Naive thymus-derived CD4-positive, alpha-beta T cell (primary cell): ENCODE measurements at regions of chr3 and their contacts with region 1.

Region 1: DNA sequence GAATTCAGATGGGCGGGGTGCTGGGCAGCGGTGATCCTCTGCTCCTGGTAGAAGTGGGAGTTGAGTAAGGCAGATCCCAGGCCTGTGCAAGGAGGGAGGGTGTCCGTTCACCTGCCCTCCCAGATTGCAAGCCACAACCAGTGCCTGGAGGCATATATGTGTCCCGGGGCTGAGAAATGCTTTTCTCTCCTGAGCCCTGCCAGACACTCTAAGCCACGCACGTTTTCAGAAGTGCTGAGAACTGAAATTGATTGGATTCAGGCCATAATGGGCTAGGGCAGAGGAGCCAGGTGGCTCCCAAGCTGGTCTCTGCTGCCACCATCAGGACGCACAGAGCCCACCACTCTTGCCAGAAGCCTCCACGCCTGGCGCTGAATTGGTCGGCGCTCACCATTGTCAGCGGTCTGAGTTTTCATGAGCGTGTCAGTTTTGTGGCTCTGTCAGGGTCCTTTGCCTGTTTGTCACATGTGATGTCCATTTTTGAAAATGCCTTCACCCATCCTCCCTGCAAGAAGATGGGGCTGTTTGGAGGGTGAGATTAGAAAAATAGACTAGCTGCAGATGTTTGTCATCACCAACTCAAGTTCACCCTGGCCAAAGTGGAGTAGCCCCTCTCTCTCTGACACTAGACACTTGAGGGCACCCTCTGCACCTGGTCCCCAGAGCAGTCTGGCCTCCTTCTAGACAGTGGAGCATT is 15.4 kb upstream of the BFSP2 start:
- DNase-seq: peak in 4 of 9 donors; percentile 4 to 28 (median 4)
- ATAC-seq: no peak
- H3K4me3 ChIP-seq: no peak overlapping the region
- H3K4me3 Mint-ChIP-seq: no peak overlapping the region
- H3K27ac ChIP-seq: no peak overlapping the region
- H3K27ac Mint-ChIP-seq: no peak overlapping the region
- H3K4me1 ChIP-seq: no peaks in the 10 kb centered on the region
- H3K4me1 Mint-ChIP-seq: no peaks in the 10 kb centered on the region
- H3K27me3 ChIP-seq: no peaks in the 10 kb centered on the region
- H3K27me3 Mint-ChIP-seq: peaks cover 0 to 6% (median 0%) of the 10 kb centered on the region in 5 donors

Region 2: DNA sequence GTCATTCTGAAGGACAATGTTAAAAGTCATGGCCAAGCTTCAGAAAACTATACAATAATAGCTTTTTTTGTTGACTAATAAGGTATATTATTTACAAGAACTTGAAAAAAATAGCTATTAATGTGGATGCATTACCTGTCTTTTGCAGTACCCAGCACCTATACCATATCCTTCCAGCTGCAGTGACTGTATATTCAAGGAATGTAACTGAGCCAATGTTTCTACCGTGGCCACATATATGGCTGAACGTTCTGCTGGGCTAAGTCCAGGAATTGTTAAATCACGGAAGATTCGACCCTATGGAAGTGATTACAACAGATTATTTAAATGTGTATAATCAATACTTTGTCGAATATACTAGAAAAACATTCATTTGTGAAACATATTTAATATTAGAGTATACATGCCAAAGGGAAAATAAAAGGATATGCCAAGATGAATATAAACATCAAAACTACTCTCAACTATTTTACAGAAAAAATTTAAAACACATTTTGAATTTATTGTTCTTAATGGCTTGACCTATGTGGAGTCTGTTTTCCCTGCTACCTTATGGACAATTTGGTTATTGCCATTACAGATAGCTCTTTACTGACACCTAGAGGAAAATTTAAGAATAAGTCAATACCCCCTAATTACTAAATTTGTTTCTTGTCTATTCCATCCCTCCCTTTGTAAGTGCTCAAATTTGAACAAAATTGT is 742.5 kb before region 1 on chr3:
- CTCF ChIA-PET with region 1: no interaction called
- POLR2A ChIA-PET with region 1: no interaction called
- intact Hi-C with region 1: no loop called
- DNase-seq: peak in 5 of 9 donors; percentile 17 to 45 (median 36)
- ATAC-seq: peak; percentile 67
- H3K4me3 ChIP-seq: no peak overlapping the region
- H3K4me3 Mint-ChIP-seq: no peak overlapping the region
- H3K27ac ChIP-seq: no peak overlapping the region
- H3K27ac Mint-ChIP-seq: no peak overlapping the region
- H3K4me1 ChIP-seq: no peaks in the 10 kb centered on the region
- H3K4me1 Mint-ChIP-seq: peaks cover 0 to 11% (median 3%) of the 10 kb centered on the region in 7 donors
- H3K27me3 ChIP-seq: no peaks in the 10 kb centered on the region
- H3K27me3 Mint-ChIP-seq: no peaks in the 10 kb centered on the region

Region 3: GRCh38 chr3:132720228-132720627 is 664.3 kb before region 1 on chr3:
- CTCF ChIA-PET with region 1: no interaction called
- POLR2A ChIA-PET with region 1: no interaction called
- intact Hi-C with region 1: no loop called
- DNase-seq: no peak
- ATAC-seq: no peak
- H3K4me3 ChIP-seq: no peak overlapping the region
- H3K4me3 Mint-ChIP-seq: peak overlapping the region; percentile 84 to 95 (median 92)
- H3K27ac ChIP-seq: no peak overlapping the region
- H3K27ac Mint-ChIP-seq: peak overlapping the region in 8 of 9 donors; percentile 37 to 85 (median 64)
- H3K4me1 ChIP-seq: peaks cover 16 to 26% of the 10 kb centered on the region in 2 donors
- H3K4me1 Mint-ChIP-seq: peaks cover 17 to 62% (median 49%) of the 10 kb centered on the region in 7 donors
- H3K27me3 ChIP-seq: no peaks in the 10 kb centered on the region
- H3K27me3 Mint-ChIP-seq: no peaks in the 10 kb centered on the region

Region 4: DNA sequence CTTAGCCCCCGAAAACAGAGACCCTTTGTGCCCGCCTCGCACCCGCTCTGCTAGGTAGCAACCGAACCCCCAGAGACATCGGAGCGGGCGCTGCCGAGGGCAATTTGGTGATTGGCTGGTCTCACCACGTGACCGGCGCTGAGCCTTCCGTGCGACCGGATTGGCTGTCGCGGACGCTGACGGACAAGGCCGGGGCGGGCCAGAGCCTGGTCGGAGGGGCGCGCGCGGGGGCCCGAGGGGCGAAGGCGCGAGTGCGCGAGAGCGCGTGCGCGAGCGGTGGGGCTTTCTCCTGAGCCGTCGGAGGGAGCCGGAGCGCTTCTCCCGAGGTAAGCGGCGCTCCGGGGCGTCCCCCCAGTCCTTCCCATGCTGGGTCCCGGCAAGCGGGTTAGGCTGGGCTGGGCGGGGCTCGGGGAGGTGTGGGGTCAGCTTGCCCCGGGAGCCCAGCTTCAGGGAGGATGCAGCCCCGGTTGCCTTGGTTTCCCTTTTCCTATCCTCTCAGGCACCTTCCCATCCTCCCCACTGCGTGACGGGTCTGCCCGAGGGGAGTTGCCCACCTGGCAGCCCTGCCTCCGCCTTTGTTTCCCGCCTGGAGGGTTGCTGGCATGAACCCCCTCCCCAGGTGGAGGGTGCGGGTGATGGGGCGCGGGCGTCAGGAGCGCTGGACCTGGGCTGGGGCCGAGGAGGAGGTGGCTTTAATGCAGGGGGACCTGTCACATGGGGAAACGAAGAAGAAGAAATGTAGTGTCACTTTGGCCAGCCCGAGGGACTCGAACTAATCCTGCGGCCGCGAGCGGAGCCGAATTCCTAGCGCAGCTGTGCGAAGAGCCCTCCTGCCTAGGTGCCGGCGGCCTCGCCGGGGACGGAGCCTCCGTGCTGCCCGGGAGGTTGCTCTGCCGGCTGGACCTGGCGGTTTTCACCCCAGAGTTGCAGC is 346.1 kb before region 1 on chr3 and contains the start of gene TMEM108:
- CTCF ChIA-PET with region 1: no interaction called
- POLR2A ChIA-PET with region 1: no interaction called
- intact Hi-C with region 1: loop called in 1 of 2 experiments (anchors 10 kb)
- DNase-seq: peak in 1 of 9 donors; percentile 41
- ATAC-seq: no peak
- H3K4me3 ChIP-seq: no peak within 1 kb of the TSS
- H3K4me3 Mint-ChIP-seq: peak within 1 kb of the TSS; percentile 29 to 75 (median 50)
- H3K27ac ChIP-seq: no peak within 1 kb of the TSS
- H3K27ac Mint-ChIP-seq: peak within 1 kb of the TSS in 1 of 9 donors; percentile 55
- H3K4me1 ChIP-seq: no peaks in the 10 kb centered on the region
- H3K4me1 Mint-ChIP-seq: peaks cover 0 to 15% (median 8%) of the 10 kb centered on the region in 7 donors
- H3K27me3 ChIP-seq: peaks cover 0 to 6% of the 10 kb centered on the region in 2 donors
- H3K27me3 Mint-ChIP-seq: peaks cover 49 to 70% (median 62%) of the 10 kb centered on the region in 5 donors
- total RNA-seq, gene TMEM108: not detected